HCT116 (cell line): ENCODE measurements at regions of chr9 and their contacts with region 1.

Region 1: DNA sequence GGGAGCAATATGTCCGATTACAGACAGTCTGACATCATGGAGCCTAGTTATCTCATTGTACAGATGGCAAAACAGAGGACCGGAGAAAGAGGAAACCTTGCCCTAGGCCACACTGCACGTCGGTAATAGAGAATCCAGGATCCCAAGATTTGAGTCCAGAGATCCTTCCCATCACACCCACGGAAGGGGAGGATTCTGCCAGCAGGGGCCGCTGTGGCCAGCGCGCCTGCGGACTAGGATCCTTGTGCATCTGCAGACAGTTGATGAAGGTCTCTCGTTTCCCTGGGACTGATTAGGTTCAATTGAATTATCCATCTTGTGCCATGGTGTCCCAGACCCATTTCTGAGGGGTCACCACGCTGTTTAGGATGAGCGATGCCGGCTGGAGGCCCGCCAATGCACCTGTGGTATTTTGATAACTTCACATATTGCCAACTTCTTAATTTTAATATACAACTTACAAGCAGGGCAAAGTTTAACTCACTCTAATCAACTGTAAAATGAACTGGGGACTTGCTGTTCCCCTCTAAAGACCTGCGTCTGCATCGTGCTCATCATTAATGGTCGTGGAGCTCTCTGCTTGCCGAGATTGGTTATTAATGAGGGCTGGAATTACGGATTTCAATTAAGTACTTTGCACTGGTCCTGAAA is 592.7 kb upstream of the BRINP1 start:
- DNase-seq: peak; percentile 27
- ATAC-seq: peak; percentile 84
- H3K4me3 ChIP-seq: no peak overlapping the region
- H3K27ac ChIP-seq: no peak overlapping the region
- H3K4me1 ChIP-seq: peaks cover 16 to 19% of the 10 kb centered on the region in 2 experiments; a peak in 3 of 4 replicates
- H3K27me3 ChIP-seq: 0 out of 2 replicates have a peak, but pooled peaks cover 5% of the 10 kb centered on the region
- CTCF ChIP-seq: peak; percentile 41 to 94 (median 93); a peak in 5 of 6 replicates
- POLR2A ChIP-seq: no peak
- RAD21 ChIP-seq: peak; percentile 56

Region 2: GRCh38 chr9:120348951-120349429 is 387.1 kb after region 1 on chr9:
- CTCF ChIA-PET with region 1: no interaction called
- POLR2A ChIA-PET with region 1: no interaction called
- RAD21 ChIA-PET with region 1: no interaction called
- intact Hi-C with region 1: loop called (anchors 2 kb)
- DNase-seq: peak; percentile 31
- ATAC-seq: peak; percentile 92
- H3K4me3 ChIP-seq: no peak overlapping the region
- H3K27ac ChIP-seq: no peak overlapping the region
- H3K4me1 ChIP-seq: peaks cover 5 to 8% of the 10 kb centered on the region in 2 experiments
- H3K27me3 ChIP-seq: no peaks in the 10 kb centered on the region
- CTCF ChIP-seq: peak; percentile 42 to 83 (median 71); a peak in 5 of 6 replicates
- POLR2A ChIP-seq: no peak
- RAD21 ChIP-seq: peak; percentile 84

Region 3: DNA sequence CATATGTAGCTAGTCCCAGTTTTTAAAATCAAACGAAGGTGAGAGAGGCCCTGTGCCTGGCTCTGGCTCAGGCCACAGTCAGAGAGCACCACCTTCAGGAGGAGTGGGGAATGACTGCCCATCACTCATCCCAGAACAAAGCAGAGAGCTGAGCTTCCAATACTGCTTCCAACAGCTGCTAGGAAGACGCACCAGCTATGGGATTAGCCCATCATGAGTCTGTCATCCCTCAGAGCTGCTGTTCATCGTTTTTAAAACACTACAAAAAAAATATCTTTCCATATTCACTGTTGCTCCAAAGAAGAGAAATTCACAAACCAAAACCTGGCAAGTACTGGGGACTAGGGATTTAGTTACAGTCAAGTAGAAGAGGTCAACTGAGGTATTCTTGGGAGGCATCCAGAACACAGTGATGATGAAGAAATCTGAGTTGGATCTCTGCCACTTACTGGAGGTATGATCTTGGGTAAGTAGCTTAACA is 515.7 kb after region 1 on chr9:
- CTCF ChIA-PET with region 1: interaction called, 3 read pairs
- POLR2A ChIA-PET with region 1: no interaction called
- RAD21 ChIA-PET with region 1: no interaction called
- intact Hi-C with region 1: loop called (anchors 2 kb)
- DNase-seq: peak; percentile 8
- ATAC-seq: peak; percentile 94
- H3K4me3 ChIP-seq: no peak overlapping the region
- H3K27ac ChIP-seq: no peak overlapping the region
- H3K4me1 ChIP-seq: no peaks in the 10 kb centered on the region
- H3K27me3 ChIP-seq: no peaks in the 10 kb centered on the region
- CTCF ChIP-seq: peak; percentile 19 to 88 (median 87); a peak in 4 of 6 replicates
- POLR2A ChIP-seq: no peak
- RAD21 ChIP-seq: peak; percentile 71

Region 4: GRCh38 chr9:120531683-120532300 is 569.9 kb after region 1 on chr9:
- CTCF ChIA-PET with region 1: no interaction called
- POLR2A ChIA-PET with region 1: no interaction called
- RAD21 ChIA-PET with region 1: no interaction called
- intact Hi-C with region 1: loop called (anchors 5 kb)
- DNase-seq: peak; percentile 27
- ATAC-seq: peak; percentile 76
- H3K4me3 ChIP-seq: peak overlapping the region in 1 of 2 experiments; percentile 21; a peak in 2 of 4 replicates
- H3K27ac ChIP-seq: peak overlapping the region; percentile 47
- H3K4me1 ChIP-seq: peaks cover 25 to 34% of the 10 kb centered on the region in 2 experiments
- H3K27me3 ChIP-seq: no peaks in the 10 kb centered on the region
- CTCF ChIP-seq: peak; percentile 31 to 66 (median 50); a peak in 5 of 6 replicates
- POLR2A ChIP-seq: no peak
- RAD21 ChIP-seq: peak; percentile 65